Activated T-helper 1 cell treated with anti-CD3 and anti-CD28 coated beads, Interleukin-12 subunit alpha, Interleukin-12 subunit beta, Interleukin-2, Interleukin-4 antibody, amounts not matched to agents 30 ng/mL and 10 ng/mL and 1 ng/mL, durations not matched to agents 14 hours and 24 hours and 36 hours (primary cell): ENCODE measurements at regions of chr4 and their contacts with region 1.

Region 1: DNA sequence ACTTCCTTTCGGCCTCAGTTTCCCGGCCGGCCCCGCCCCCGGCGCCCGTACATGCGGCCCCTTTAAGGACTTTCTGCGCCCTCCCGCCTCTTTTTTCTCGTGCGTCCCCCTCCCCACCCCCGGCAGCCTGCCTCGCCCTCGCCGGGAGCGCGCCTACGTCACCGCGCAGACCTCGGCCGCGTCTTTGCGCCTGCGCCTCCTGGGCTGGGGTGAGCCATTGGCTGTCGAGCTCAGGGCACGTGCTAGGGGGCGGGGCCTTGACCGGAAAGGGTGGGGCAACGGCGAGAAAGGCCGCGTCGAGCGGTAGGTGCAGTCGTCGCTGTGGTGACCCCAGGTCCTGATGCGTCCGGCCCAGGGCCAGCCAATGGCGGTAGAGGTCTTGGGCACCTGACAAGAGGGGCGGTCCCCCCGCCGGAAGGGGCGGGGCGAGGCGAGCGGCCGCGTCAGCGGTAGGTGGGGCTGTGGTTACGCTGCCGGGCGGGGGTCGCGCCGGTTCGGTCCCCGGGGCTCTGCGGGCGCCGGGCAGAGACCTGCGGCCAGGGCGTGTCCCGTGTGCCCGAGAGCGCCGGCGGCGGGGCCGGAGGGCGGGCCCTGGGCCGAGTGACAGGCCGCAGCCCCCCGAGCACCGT is at the start of gene UVSSA:
- DNase-seq: peak; percentile 100
- H3K4me3 Mint-ChIP-seq: peak within 1 kb of the TSS; percentile 92
- H3K27ac Mint-ChIP-seq: peak within 1 kb of the TSS; percentile 92
- H3K4me1 Mint-ChIP-seq: peaks cover 32% of the 10 kb centered on the region
- H3K27me3 Mint-ChIP-seq: peaks cover 2% of the 10 kb centered on the region
- total RNA-seq, gene UVSSA: 25.8 and 27.5 TPM in 2 replicates

Region 2: DNA sequence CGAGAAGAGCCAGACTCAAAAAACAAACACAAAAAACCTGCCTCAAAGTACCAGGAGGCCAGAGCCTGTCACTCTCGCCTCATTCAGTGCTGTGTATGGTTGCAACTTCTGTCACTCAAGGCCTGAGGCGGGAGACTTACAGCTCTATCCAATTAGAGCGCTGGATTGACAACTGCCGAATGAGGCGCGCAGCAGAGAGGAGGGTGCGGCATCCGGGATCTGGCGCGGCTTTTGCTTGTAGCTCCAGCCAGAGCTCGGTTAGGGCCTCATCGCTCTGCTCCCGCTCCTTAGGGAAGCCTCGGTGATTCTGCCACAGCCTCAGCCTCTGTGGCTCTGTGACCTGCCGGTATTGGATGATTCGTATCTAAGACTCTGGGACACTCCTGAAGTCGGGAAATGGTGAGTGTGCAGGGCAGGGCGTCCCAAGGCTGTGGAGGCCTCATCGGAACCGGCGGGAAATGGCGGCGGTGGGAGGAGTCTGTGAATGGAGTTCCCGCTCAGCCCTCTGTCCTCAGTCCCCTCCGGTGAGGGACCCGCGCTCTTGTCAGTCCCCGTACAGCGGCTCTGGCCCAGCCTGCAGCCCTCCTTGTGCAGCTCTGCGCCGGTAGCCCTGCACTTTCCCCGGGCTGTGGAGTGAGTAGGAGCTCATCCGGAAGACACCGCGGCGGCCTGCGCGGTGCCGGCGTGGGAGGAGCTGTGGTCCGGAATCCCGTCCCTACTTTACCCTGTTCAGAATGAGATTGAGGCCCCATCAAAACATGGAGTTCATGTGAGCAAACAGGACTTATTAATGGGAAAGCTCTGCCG is 1222.4 kb before region 1 on chr4 and contains the start of gene ZNF718:
- intact Hi-C with region 1: loop called (anchors 5 kb)
- DNase-seq: peak; percentile 91
- H3K4me3 Mint-ChIP-seq: peak within 1 kb of the TSS; percentile 96
- H3K27ac Mint-ChIP-seq: peak within 1 kb of the TSS; percentile 99
- H3K4me1 Mint-ChIP-seq: peaks cover 33% of the 10 kb centered on the region
- H3K27me3 Mint-ChIP-seq: no peaks in the 10 kb centered on the region
- total RNA-seq, gene ZNF718: 7.3 and 7.7 TPM in 2 replicates

Region 3: GRCh38 chr4:973431-974397 is 373.2 kb before region 1 on chr4 and contains the start of gene DGKQ:
- intact Hi-C with region 1: loop called (anchors 5 kb)
- DNase-seq: peak; percentile 80
- H3K4me3 Mint-ChIP-seq: peak within 1 kb of the TSS; percentile 51
- H3K27ac Mint-ChIP-seq: no peak within 1 kb of the TSS
- H3K4me1 Mint-ChIP-seq: no peaks in the 10 kb centered on the region
- H3K27me3 Mint-ChIP-seq: no peaks in the 10 kb centered on the region
- total RNA-seq, gene DGKQ: 17.8 and 18.0 TPM in 2 replicates

Region 4: DNA sequence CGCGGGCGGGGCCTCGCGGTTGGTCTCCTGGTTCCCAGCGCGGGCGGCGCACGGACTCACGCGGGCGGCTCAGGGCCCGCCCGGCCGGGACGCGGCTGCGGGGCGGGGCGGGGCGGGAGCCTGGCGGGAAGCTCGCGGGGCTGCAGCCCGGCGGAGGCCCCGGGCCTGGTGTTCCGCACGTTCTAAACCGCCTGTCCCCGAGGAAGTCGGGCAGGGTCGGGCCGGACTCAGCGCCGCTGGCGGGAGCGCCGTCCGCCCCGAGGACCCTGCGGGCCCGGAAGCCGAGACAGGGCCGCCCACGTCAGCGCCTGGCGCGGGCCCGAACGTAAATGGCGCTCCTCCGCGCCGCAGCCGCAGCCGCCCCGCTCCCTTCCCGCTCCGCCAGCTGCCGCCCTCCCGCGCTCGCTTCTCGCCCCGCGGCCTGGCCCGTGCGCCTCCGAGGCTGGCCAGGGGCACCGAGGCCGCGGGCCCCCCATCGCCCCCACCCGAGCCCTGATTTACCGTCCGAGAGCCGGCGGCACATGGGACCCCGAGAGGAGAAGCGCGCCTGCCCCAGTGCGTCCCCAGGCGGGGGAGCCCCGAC is 97.7 kb before region 1 on chr4:
- intact Hi-C with region 1: loop called (anchors 1 kb)
- DNase-seq: peak; percentile 83
- H3K4me3 Mint-ChIP-seq: peak overlapping the region; percentile 89
- H3K27ac Mint-ChIP-seq: peak overlapping the region; percentile 96
- H3K4me1 Mint-ChIP-seq: peaks cover 57% of the 10 kb centered on the region
- H3K27me3 Mint-ChIP-seq: no peaks in the 10 kb centered on the region

Region 5: DNA sequence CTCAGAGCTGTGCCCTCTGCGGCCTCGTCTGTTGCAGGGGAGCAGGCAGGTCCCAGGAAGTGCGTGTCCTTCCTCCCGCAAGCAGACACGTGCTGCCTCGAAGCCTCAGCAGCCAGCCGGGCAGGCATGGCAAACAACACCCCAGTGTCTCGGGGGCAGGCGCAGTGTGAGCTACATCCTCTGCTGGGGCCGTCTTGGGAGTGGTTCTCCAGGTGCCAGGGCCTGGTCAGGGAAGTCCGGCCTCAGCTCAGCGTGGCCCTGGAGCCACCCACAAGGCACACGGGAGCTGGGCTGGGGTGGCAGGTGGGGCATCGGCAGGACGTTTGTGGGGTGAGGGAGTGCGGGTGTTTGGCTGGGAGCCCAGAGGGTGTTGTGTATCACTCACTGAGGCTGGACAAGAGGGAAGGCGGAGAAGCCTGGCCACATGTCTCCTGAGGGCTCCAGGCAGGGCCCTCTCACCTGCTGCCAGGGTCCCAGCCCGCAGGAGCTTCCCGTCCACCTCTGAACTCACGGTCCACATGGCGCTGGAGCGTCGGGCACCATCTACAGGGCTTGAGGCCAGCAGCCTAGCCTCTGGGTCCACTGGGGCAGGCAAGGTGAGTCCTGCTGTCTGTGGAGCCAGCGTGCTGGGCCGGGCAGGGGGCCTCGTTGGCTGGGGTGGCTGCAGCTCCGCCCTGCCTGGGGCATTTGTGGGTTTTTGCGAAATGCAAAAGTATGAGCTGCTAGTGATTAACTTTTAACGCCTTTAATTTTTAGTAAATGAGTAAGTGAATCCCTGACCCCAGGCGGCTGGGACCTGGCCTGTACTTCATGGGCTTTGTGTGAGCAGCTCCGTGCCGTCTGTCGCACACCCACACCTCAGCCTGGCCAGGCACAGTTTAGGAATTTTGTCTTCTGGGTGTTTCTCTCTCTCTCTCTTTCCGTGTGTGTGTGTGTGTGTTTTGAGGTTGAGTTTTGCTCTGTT is 17.2 kb before region 1 on chr4:
- intact Hi-C with region 1: loop called (anchors 2 kb)
- DNase-seq: no peak
- H3K4me3 Mint-ChIP-seq: no peak overlapping the region
- H3K27ac Mint-ChIP-seq: no peak overlapping the region
- H3K4me1 Mint-ChIP-seq: peaks cover 31% of the 10 kb centered on the region
- H3K27me3 Mint-ChIP-seq: no peaks in the 10 kb centered on the region

Region 6: DNA sequence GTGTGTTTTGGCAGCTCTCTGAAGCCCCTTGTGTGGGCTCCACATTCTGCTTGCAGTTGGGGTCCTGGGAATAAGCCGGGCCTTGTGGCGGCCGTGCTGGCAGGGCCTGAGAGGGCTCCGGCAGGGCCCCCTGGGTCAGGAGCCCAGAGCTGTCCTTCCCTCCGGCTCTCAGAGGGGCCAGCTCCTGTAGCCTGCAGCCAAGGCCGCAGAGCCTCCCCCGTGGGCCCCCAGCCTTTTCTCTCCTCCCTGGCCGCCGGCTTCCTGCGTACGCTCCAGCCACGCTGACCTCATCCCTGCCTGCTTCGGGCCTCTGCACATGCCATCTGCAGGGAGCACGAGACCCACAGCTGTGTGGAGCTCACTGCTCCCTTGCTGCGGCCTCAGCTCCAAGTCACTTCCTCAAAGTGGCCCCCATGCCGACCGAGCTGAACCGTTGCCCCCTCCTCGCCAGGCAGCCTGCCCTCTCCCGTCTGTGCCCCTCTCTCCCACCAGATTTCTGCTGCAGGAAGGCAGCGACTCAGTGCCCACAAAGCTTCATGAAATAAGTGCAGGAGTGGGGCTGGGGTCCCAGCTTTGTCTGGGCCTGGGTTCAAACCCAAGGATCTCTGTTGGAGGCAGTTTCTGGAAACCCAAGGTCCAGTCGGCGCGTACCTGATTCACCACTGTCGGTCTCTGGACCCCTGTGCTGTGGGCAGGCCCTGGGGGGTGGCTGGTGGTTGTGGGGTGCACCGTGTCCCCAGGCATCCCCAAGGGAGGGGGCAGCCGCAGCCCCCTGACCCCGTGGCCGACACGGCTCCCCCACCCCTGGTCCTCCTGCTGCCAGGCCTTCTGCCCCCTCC is 116.4 kb after region 1 on chr4:
- intact Hi-C with region 1: no loop called
- DNase-seq: no peak
- H3K4me3 Mint-ChIP-seq: no peak overlapping the region
- H3K27ac Mint-ChIP-seq: no peak overlapping the region
- H3K4me1 Mint-ChIP-seq: no peaks in the 10 kb centered on the region
- H3K27me3 Mint-ChIP-seq: peaks cover 3% of the 10 kb centered on the region

Region 7: GRCh38 chr4:1712216-1713002 is 365.5 kb after region 1 on chr4 and contains the start of gene SLBP:
- intact Hi-C with region 1: loop called (anchors 1 kb)
- DNase-seq: peak; percentile 99
- H3K4me3 Mint-ChIP-seq: peak within 1 kb of the TSS; percentile 99
- H3K27ac Mint-ChIP-seq: peak within 1 kb of the TSS; percentile 89
- H3K4me1 Mint-ChIP-seq: peaks cover 59% of the 10 kb centered on the region
- H3K27me3 Mint-ChIP-seq: no peaks in the 10 kb centered on the region
- total RNA-seq, gene SLBP: 136 and 140 TPM in 2 replicates

Region 8: DNA sequence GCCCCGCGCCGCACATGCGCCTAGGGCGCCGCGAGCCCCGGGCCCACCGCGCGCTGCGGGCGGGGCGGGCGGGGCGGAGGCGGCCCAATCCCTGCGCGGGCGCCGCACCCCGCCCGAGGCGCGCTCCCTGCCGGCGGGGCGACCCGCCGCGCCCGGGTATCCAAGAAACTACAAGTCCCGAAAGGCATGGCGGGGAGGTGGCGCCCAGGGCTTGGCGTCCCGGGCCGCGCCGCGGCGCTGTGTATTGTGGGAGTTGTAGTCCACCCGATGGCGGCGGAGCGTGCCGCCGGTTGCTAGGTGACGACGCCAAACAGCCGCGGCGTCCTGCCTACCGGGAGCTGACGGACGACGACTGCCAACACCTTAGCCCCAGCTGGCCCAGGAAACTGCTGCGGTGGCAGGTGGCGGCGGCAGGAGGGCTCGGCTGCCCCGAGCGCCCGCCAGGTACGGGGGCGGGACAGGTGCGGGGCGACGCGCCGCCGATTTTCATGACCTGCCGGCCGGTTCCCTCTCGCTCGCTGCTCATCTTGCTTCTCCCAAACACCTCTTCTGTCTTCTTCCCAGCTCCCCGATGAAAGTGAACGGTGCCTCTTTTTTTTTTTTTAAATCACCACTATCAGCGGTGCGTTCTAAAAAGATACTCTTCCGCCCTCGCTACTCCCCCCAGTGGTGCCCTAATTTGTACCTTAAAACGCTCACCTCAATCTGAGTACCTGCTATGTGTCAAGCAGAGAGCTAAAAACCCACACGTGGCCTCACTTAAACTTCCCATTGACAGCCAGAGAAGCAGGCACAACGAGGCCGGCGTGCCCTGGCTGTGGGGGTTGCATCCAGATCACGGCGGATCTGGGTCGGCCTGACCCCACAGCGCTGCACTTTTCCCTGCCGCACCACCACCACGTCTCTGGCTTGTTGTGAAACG is 1072.0 kb after region 1 on chr4 and contains the start of gene CFAP99:
- intact Hi-C with region 1: loop called (anchors 10 kb)
- DNase-seq: peak; percentile 94
- H3K4me3 Mint-ChIP-seq: peak within 1 kb of the TSS; percentile 85
- H3K27ac Mint-ChIP-seq: peak within 1 kb of the TSS; percentile 82
- H3K4me1 Mint-ChIP-seq: peaks cover 39% of the 10 kb centered on the region
- H3K27me3 Mint-ChIP-seq: peaks cover 55% of the 10 kb centered on the region
- total RNA-seq, gene CFAP99: not detected in 2 replicates